Activated naive CD4-positive, alpha-beta T cell treated with anti-CD3 and anti-CD28 coated beads for 36 hours (primary cell): ENCODE measurements at regions of chr4 and their contacts with region 1.

Region 1: DNA sequence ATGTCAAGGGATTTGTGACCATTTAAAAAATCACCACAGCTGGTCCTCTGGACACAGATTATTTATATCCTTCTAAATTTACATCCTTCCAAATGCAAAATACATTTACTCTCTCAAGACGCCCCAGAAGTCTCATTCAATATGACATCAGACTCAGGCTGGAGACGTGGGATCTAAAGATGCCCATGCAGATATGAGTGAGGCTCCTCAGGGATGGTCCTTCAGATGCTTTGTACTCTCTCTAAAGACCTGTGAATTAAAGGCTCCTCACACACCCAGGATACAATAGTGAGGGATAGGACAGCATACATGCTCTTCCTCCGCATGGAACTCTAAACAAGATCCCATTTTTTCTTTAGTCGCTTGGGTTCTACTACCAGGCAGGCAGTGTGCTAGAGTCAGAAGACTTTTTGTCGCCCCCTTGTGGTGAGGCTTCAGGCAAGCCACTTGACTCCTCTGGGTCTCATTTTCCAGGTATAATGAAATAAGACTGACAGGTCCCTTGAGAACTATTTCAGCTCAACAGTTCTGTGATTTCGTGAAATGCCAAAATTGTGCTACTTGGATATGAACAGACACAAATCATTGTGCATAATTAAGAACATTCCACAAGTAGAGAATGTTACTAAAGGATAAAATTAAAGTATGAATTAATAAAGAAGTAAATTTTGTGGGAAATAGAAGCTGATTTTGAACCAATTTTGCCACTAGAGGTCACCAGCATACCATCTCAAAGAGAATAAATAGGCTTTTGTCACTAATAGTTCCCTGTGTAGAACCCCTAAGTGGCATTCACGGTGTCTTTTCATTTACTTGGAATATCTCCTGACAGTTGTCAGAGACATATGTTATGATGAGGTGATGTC is 13.7 kb upstream of the SCOC start:
- DNase-seq: peak; percentile 89
- H3K4me3 Mint-ChIP-seq: no peak overlapping the region
- H3K27ac Mint-ChIP-seq: no peak overlapping the region
- H3K4me1 Mint-ChIP-seq: no peaks in the 10 kb centered on the region
- H3K27me3 Mint-ChIP-seq: no peaks in the 10 kb centered on the region

Region 2: GRCh38 chr4:139734875-139735380 is 624.9 kb before region 1 on chr4:
- CTCF ChIA-PET with region 1: interaction called, 4 read pairs
- intact Hi-C with region 1: loop called (anchors 1 kb)
- DNase-seq: peak; percentile 78
- H3K4me3 Mint-ChIP-seq: peak overlapping the region; percentile 61
- H3K27ac Mint-ChIP-seq: no peak overlapping the region
- H3K4me1 Mint-ChIP-seq: peaks cover 22% of the 10 kb centered on the region
- H3K27me3 Mint-ChIP-seq: peaks cover 29% of the 10 kb centered on the region

Region 3: DNA sequence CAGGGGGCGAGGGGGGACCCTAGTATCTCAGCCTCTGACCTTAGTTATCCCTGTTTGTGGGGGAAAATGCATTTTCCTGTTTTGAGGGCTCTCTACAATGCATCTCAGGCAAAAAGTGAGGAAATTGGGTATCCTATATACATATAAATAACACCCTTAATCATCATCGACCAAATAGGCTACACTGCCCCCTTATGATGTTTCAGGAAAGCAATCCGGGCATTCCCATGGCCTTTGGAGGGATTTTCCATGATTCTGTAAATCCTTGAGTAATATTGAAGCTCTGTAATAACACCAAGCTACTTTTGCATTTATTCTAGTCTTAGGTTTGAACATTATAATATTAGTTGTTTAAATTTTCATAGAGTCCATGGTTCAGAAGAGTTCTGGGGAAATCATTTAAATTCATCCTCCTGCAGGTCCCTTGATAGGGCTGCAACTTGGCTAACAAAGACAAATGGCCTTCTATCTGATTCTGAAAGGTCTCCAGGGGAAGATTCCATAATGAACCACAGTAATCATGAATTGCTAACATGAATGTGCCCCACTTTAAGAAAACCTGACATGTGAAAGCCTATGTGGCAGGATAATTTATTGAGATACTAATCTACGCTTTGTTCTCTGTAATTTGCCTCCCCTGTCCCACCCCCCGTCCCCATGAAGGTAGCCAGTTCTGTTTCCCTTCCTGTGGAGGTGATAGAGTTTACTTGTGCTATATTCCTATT is 77.8 kb before region 1 on chr4:
- CTCF ChIA-PET with region 1: no interaction called
- intact Hi-C with region 1: no loop called
- DNase-seq: no peak
- H3K4me3 Mint-ChIP-seq: no peak overlapping the region
- H3K27ac Mint-ChIP-seq: no peak overlapping the region
- H3K4me1 Mint-ChIP-seq: no peaks in the 10 kb centered on the region
- H3K27me3 Mint-ChIP-seq: peaks cover 19% of the 10 kb centered on the region

Region 4: GRCh38 chr4:140343303-140343702 is 16.5 kb before region 1 on chr4:
- CTCF ChIA-PET with region 1: interaction called, 10 read pairs
- intact Hi-C with region 1: no loop called
- DNase-seq: no peak
- H3K4me3 Mint-ChIP-seq: no peak overlapping the region
- H3K27ac Mint-ChIP-seq: no peak overlapping the region
- H3K4me1 Mint-ChIP-seq: peaks cover 4% of the 10 kb centered on the region
- H3K27me3 Mint-ChIP-seq: peaks cover 16% of the 10 kb centered on the region

Region 5: DNA sequence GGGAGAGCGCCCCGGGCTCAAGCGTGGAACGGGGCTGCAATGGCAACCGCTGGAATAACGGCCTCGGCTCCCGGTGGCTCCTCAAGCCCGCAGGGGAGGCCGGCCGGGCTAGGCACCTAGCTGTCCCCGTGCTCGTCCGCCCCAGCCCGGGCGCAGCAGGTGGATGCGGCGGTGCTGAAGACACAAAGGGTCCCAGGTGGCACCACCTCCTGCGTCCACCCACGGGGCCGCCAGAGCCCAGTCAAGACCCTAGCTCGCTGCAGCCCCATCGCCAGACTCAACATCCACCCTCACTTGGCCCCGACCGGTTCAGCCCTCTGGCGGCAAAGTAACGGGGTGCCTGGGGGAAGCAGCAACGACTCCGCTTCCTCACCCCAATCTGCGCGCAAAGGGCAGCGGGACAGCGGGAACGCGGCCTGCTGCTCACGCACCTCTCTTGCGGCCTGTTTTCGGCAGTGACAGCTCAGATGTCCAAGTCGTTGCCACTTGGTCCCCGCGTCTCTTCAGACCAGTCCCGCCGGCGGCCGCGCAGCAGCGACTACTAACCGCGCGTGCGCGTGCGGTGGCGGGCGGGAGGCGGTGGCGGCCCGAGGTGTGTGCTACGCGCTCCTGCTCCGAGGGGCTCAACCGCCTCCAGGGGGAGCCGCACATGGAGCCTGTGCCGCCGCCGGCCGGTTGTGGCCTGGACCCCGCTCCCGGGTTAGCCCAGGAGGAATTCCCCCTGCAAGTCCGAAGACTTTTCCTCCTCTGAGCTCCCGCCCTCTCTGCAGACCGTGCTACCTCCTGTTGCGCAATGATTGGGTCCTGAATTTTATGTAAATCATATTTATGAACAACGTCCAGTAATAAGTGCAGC is 67.5 kb after region 1 on chr4 and contains the start of gene CLGN:
- CTCF ChIA-PET with region 1: interaction called, 13 read pairs
- intact Hi-C with region 1: no loop called
- DNase-seq: peak; percentile 51
- H3K4me3 Mint-ChIP-seq: peak within 1 kb of the TSS; percentile 76
- H3K27ac Mint-ChIP-seq: no peak within 1 kb of the TSS
- H3K4me1 Mint-ChIP-seq: peaks cover 5% of the 10 kb centered on the region
- H3K27me3 Mint-ChIP-seq: peaks cover 44% of the 10 kb centered on the region
- total RNA-seq, gene CLGN: 0.10 TPM in 1 of 2 experiments, not detected in the other

Region 6: GRCh38 chr4:140637836-140638235 is 278.0 kb after region 1 on chr4:
- CTCF ChIA-PET with region 1: interaction called, 8 read pairs
- intact Hi-C with region 1: loop called (anchors 1 kb)
- DNase-seq: peak; percentile 65
- H3K4me3 Mint-ChIP-seq: no peak overlapping the region
- H3K27ac Mint-ChIP-seq: no peak overlapping the region
- H3K4me1 Mint-ChIP-seq: no peaks in the 10 kb centered on the region
- H3K27me3 Mint-ChIP-seq: peaks cover 14% of the 10 kb centered on the region

Region 7: GRCh38 chr4:140884431-140885058 is 524.8 kb after region 1 on chr4:
- CTCF ChIA-PET with region 1: no interaction called
- intact Hi-C with region 1: loop called (anchors 1 kb)
- DNase-seq: peak; percentile 29
- H3K4me3 Mint-ChIP-seq: no peak overlapping the region
- H3K27ac Mint-ChIP-seq: no peak overlapping the region
- H3K4me1 Mint-ChIP-seq: no peaks in the 10 kb centered on the region
- H3K27me3 Mint-ChIP-seq: no peaks in the 10 kb centered on the region